ENCODE measurements at regions of chr12 and their contacts with region 1.

Region 1: DNA sequence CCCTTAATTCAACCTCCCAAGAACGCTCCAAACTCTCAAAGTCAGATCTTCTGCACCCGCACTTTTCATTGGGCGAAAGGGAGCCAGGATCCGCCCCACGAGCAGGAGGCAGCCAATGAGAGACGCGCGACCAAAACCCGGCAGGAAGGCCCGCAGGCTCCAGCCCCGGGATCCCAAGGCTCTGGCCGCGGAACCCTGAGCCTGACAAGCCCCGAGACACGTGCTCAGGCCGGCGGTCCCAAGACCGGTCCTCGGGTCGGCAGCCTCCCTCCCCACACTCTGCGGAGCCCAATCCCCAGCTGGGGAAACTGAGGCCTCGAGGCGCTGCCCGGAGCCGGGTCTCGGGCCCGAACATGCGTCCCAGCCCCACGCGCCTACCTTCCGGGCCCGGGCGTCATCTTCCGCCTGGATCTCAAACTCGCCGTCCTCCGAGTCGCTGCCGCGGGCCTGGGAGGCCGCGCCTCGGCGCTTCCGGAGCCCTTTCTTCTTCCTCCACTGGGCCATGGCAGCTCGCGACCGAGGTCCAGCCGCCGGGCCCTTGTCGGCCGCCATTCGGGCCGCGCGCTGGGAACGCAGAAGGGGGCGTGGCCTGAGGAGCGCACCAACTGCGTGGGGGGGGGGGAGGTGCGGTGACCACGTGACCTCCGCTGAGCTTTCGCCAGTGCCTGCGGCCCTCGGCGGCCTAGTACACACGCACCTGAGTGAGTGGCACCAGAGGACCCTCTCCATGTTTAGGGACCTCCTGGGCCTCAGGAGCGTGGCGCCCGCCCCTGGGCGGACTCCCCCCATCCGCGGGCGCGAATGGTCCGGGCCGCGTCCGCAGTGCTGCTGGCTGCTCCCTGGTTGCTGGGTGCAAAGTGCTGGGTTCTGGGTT is at the starts of genes DDX54 and RITA1:
- DNase-seq: peak; percentile 91
- H3K4me3 ChIP-seq: peak within 1 kb of the TSS; percentile 84 to 98 (median 92)
- H3K27ac ChIP-seq: peak within 1 kb of the TSS; percentile 94 to 100 (median 97)
- H3K4me1 ChIP-seq: peaks cover 8 to 28% (median 26%) of the 10 kb centered on the region in 4 donors
- H3K27me3 ChIP-seq: no peaks in the 10 kb centered on the region
- CTCF ChIP-seq: no peak
- EP300 ChIP-seq: no peak
- POLR2A ChIP-seq: peak; percentile 77
- total RNA-seq, gene DDX54: 60.7 to 96.1 (median 72.8) TPM
- total RNA-seq, gene RITA1: 17.5 to 41.5 (median 23.8) TPM

Region 2: DNA sequence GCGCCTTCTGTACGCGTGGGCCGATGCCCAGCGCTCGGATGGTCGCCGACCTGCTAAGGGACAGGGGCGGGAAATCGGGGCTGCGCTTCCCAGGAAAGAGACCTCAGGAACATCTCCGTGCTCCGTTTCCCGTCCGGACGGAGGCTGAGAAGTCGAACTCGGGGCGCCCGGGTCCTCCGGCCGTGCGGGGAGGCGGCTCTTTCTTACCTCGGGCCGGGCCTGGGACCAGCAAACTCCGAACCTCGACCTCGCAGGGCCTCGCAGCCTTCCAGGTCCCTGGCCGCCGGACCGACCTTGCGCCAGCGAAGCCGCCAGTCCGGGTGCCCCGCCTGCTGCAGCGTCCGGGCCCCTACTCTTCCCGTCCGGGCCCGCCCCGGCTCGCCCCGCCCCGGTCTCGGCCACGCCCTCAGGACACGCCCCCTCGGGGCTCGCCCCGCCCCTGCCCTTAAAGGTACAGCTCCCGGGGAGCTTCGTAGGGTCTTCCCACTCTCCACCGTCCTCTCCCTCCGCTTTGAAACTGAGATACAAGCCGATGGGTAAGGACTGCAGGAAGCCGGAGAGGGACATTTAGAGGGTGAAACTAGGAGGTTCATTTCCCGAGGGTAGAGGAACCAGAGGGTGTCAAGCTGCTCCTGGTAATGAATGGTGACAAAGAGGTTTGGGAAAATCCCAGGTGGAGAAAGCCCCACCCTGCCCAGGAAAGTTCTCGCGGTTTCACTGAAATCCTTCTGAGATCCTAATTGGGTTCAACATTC is 149.8 kb after region 1 on chr12 and contains the start of gene SLC8B1:
- in situ Hi-C with region 1: loop called in 1 of 4 experiments (anchors 25 kb)
- intact Hi-C with region 1: no loop called
- DNase-seq: peak; percentile 92
- H3K4me3 ChIP-seq: peak within 1 kb of the TSS; percentile 20 to 93 (median 76)
- H3K27ac ChIP-seq: peak within 1 kb of the TSS; percentile 78 to 92 (median 86)
- H3K4me1 ChIP-seq: peaks cover 0 to 23% (median 20%) of the 10 kb centered on the region in 4 donors
- H3K27me3 ChIP-seq: no peaks in the 10 kb centered on the region
- CTCF ChIP-seq: no peak
- EP300 ChIP-seq: no peak
- POLR2A ChIP-seq: peak; percentile 95
- total RNA-seq, gene SLC8B1: 76.5 to 256 (median 95.5) TPM

Region 3: DNA sequence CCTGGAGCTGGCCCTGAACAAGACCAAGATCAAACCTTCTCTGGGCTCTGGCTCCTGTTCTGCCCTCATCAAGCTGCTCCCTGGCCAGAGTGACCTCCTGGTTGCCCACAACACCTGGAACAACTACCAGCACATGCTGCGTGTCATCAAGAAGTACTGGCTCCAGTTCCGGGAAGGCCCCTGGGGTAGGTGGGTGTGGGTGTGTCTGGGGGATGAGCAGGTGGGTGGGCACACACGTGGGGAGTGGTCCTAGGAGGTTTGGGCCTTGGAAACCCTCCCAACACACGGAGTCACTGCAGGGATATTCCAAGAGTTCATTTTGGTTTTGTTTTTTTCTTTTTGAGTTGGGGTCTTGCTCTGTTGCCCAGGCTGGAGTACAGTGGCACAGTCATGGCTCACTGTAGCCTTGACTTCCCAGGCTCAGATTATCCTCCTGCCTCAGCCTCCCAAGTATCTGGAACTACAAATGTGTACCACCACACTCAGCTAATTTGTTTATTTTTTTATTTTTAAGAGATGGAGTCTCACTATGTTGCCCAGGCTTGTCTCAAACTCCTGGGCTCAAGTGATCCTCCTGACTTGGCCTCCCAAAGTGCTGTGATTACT is 189.8 kb after region 1 on chr12:
- in situ Hi-C with region 1: no loop called
- intact Hi-C with region 1: no loop called
- DNase-seq: no peak
- H3K4me3 ChIP-seq: no peak overlapping the region
- H3K27ac ChIP-seq: no peak overlapping the region
- H3K4me1 ChIP-seq: no peaks in the 10 kb centered on the region
- H3K27me3 ChIP-seq: no peaks in the 10 kb centered on the region
- CTCF ChIP-seq: no peak
- EP300 ChIP-seq: no peak
- POLR2A ChIP-seq: no peak

Measured in transverse colon (tissue), 4 donors.